ENCODE measurements at regions of chr7 and their contacts with region 1.

Region 1: DNA sequence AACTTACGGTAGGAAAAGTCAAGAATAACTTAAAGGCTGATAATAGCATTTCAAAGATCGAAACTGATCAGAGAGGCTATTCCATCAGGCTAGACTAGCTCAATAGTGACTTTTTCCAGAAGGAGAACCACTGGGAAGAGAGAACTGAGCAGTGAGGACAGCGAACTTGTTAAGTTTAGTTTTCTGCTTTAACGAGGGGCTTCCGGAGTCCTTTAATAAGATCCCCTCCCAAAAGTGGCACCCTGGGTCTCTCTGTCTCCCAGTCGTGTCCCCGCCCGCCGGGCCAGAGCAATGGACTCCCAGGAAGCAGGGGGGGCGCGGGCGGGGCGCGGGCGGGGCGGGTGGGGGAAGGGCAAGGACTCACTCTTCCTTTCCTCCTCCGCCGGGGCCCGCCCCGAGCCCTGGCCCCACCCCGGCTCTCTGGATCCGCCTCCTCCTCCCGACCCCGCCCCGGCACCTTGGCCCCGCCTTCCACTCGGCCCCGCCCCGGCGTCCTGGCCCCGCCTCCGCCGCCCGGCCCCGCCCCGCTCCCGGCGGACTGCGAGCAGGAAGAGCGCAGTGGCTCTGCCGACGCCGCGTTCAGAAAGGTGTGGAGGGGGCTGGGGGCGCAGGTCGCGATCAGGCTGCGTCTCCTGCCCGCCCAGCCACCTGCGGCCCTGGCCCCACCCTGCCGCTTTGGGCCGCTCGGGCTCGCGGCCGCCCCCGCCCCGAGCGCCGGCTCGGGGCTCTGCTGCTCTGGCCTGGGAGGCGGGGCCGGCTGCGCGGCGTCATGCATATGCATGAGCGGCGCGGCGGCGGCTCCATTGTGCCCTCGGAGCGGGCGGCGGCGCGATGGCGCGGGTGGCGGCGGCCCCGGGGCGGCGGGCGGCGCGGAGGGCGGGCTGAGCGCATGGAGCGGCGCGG is at the start of gene ZMIZ2:
- DNase-seq: peak; percentile 93 to 97
- ATAC-seq: peak; percentile 98 to 99 (median 98)
- H3K4me3 ChIP-seq: peak within 1 kb of the TSS; percentile 91
- H3K27ac ChIP-seq: peak within 1 kb of the TSS; percentile 99
- H3K4me1 ChIP-seq: peaks cover 15% of the 10 kb centered on the region
- H3K27me3 ChIP-seq: no peaks in the 10 kb centered on the region
- CTCF ChIP-seq: no peak
- total RNA-seq, gene ZMIZ2: 25.0 to 32.9 (median 28.6) TPM

Region 2: DNA sequence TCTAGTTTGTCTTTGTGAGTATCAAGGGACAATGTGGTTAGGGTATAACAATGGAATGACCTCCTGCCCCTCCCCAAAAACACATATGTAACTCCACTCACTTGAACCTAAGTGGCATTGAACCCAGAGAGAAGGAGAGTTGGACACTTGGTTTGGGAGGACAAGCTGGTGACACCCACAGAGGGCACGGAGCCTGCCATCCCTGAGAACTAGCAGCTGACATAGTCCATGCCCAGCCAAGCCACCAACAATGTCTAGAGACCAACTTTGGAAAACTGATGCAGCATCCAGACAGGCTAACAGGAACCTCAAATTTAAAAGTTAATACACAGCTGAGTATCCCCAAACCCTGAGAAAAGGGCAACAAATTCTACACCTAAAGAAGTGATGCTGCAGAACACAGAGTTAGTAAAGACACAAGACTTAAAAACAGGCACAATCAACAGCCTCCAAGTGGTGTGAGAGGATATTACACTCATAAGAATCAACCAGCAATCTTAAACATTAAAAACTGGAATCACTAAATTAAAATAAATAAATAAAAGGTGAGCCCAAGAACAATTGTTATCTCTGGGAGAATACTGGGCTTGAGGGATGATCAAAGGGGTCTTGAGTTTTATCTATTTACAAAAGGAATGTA is 285.0 kb before region 1 on chr7:
- intact Hi-C with region 1: no loop called
- DNase-seq: no peak
- ATAC-seq: peak in 2 of 4 donors; percentile 37 to 41
- H3K4me3 ChIP-seq: no peak overlapping the region
- H3K27ac ChIP-seq: no peak overlapping the region
- H3K4me1 ChIP-seq: peaks cover 16% of the 10 kb centered on the region
- H3K27me3 ChIP-seq: no peaks in the 10 kb centered on the region
- CTCF ChIP-seq: peak; percentile 28

Region 3: GRCh38 chr7:44595934-44596635 is 152.2 kb before region 1 on chr7:
- intact Hi-C with region 1: loop called in 1 of 2 experiments (anchors 10 kb)
- DNase-seq: no peak
- ATAC-seq: peak; percentile 85 to 96 (median 92)
- H3K4me3 ChIP-seq: no peak overlapping the region
- H3K27ac ChIP-seq: peak overlapping the region; percentile 72
- H3K4me1 ChIP-seq: peaks cover 5% of the 10 kb centered on the region
- H3K27me3 ChIP-seq: no peaks in the 10 kb centered on the region
- CTCF ChIP-seq: no peak

Region 4: GRCh38 chr7:44706788-44707560 is 41.3 kb before region 1 on chr7:
- intact Hi-C with region 1: loop called in 1 of 2 experiments (anchors 5 kb)
- DNase-seq: peak in 1 of 2 donors; percentile 69
- ATAC-seq: peak; percentile 61 to 74 (median 72)
- H3K4me3 ChIP-seq: no peak overlapping the region
- H3K27ac ChIP-seq: peak overlapping the region; percentile 58
- H3K4me1 ChIP-seq: peaks cover 4% of the 10 kb centered on the region
- H3K27me3 ChIP-seq: no peaks in the 10 kb centered on the region
- CTCF ChIP-seq: no peak

Region 5: GRCh38 chr7:44769776-44770662 is 21.7 kb after region 1 on chr7:
- intact Hi-C with region 1: no loop called
- DNase-seq: no peak
- ATAC-seq: peak in 3 of 4 donors; percentile 9 to 19 (median 13)
- H3K4me3 ChIP-seq: no peak overlapping the region
- H3K27ac ChIP-seq: no peak overlapping the region
- H3K4me1 ChIP-seq: peaks cover 35% of the 10 kb centered on the region
- H3K27me3 ChIP-seq: no peaks in the 10 kb centered on the region
- CTCF ChIP-seq: no peak

Region 6: GRCh38 chr7:44791278-44792219 is 43.3 kb after region 1 on chr7:
- intact Hi-C with region 1: loop called in 1 of 2 experiments (anchors 5 kb)
- DNase-seq: no peak
- ATAC-seq: no peak
- H3K4me3 ChIP-seq: no peak overlapping the region
- H3K27ac ChIP-seq: no peak overlapping the region
- H3K4me1 ChIP-seq: no peaks in the 10 kb centered on the region
- H3K27me3 ChIP-seq: no peaks in the 10 kb centered on the region
- CTCF ChIP-seq: no peak

Region 7: GRCh38 chr7:44986218-44987053 is 238.1 kb after region 1 on chr7:
- intact Hi-C with region 1: no loop called
- DNase-seq: peak; percentile 95 to 98
- ATAC-seq: peak; percentile 97 to 99 (median 98)
- H3K4me3 ChIP-seq: peak overlapping the region; percentile 92
- H3K27ac ChIP-seq: peak overlapping the region; percentile 96
- H3K4me1 ChIP-seq: peaks cover 20% of the 10 kb centered on the region
- H3K27me3 ChIP-seq: no peaks in the 10 kb centered on the region
- CTCF ChIP-seq: no peak